ENCODE measurements at regions of chr6 and their contacts with region 1.

Region 1: GRCh38 chr6:36350681-36351571 is 14.2 kb upstream of the BNIP5 start:
- DNase-seq: no peak
- ATAC-seq: no peak
- H3K4me3 Mint-ChIP-seq: no peak overlapping the region
- H3K27ac Mint-ChIP-seq: no peak overlapping the region
- H3K4me1 Mint-ChIP-seq: peaks cover 3% of the 10 kb centered on the region
- H3K27me3 Mint-ChIP-seq: peaks cover 23% of the 10 kb centered on the region

Region 2: DNA sequence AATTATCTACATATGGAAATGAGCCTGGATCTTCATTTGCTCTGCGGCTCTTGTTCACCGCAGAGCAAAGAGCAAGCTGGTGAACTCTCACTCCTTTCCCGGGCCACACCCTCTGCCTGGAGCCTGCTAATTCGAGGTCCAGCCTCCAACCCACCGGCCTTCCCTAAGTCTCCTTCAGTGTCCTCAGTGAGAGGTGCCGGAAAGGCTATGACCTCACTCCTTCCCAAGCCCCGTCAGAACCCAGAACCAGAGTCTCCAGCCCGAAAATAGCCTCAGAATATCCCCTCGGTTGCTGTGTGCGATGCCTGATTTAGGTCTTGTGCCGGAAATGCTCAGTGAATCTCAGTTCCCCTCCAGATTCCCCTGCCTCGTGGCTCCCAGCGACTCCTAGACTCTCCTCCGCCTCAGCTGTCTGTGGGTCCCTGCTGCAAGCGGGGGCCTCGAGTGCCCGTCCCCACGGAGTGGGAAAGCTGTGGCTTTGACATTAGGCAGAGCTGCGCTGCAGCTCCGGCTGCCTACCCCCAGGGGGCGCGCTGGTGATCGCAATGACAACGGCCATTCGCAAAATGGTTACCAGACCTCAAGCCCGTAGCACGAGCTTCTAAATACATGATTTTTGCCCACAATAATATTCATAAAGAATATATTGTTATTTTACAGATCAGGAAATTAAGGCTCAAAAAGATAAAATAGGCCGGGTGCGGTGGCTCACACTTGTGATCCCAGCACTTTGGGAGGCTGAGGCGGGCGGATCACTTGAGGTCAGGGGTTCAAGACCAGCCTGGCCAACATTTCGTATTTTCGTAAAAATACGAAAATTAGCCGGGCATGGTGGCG is 10.1 kb before region 1 on chr6:
- CTCF ChIA-PET with region 1: interaction called, 91 read pairs
- DNase-seq: peak; percentile 79
- ATAC-seq: peak; percentile 86
- H3K4me3 Mint-ChIP-seq: no peak overlapping the region
- H3K27ac Mint-ChIP-seq: no peak overlapping the region
- H3K4me1 Mint-ChIP-seq: peaks cover 22% of the 10 kb centered on the region
- H3K27me3 Mint-ChIP-seq: peaks cover 36% of the 10 kb centered on the region

Region 3: DNA sequence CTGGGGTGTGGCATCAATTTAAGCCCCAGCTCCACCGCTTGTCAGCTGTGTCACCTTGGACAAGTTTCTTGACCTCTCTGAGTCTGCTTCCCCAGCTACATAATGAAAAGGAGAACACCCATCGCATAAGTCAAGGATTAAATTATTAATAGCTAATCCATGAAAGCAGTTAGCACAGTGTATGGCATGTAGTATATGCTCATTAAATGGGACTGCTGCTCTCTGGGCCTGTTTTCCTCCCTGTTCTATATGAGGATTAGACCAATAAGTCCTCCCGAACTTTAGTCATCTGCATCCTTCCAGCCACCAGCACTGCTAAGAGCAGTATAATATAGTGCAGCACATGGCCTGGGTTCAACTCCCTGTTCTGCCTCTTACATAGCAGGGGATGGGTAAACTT is 16.8 kb after region 1 on chr6:
- CTCF ChIA-PET with region 1: no interaction called
- DNase-seq: no peak
- ATAC-seq: no peak
- H3K4me3 Mint-ChIP-seq: no peak overlapping the region
- H3K27ac Mint-ChIP-seq: no peak overlapping the region
- H3K4me1 Mint-ChIP-seq: peaks cover 17% of the 10 kb centered on the region
- H3K27me3 Mint-ChIP-seq: no peaks in the 10 kb centered on the region

Region 4: DNA sequence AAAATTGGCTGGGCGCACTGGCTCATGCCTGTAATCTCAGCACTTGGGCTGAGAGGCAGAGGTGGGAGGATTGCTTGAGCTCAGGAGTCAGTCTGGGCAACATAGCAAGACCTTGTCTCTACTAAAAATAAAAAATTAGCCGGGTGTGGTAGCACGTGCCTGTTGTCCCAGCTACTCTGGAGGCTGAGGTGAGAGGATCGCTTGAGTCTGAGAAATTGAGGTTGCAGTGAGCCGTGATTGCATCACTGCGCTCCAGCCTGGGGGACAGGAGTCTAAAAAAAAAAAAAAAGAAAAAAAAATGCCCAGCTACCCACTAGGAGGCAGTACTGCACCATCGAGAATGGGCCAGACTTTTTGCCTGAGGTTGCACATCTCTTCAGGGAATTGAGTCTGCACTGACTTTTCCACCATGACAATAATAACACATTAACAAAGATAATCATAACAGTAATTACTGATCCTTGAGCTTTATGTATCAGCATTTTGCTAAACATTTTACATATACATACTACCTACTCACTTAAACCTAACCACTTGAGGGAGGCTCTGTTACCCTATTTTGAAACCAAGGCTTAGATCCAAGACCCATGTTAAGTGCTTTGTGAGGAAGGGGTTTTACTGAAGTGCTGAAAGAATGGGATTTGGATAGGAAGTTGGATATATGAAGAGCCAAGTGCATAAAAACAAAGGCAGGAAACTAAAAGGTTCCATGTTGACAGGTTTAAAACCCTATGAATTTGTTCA is 264.3 kb after region 1 on chr6:
- CTCF ChIA-PET with region 1: no interaction called
- DNase-seq: peak; percentile 55
- ATAC-seq: peak; percentile 52
- H3K4me3 Mint-ChIP-seq: no peak overlapping the region
- H3K27ac Mint-ChIP-seq: peak overlapping the region; percentile 4
- H3K4me1 Mint-ChIP-seq: peaks cover 13% of the 10 kb centered on the region
- H3K27me3 Mint-ChIP-seq: no peaks in the 10 kb centered on the region

Measured in activated CD8-positive, alpha-beta memory T cell treated with anti-CD3 and anti-CD28 coated beads, Interleukin-2, amount 10 ng/mL, durations not matched to agents 7 days and 5 days (primary cell).